ENCODE measurements at regions of chr7 and their contacts with region 1.

Region 1: GRCh38 chr7:75756991-75757676 is 14.9 kb downstream of the CCL26 start:
- DNase-seq: no peak
- ATAC-seq: peak in 1 of 4 donors; percentile 39
- H3K4me3 ChIP-seq: no peak overlapping the region
- H3K27ac ChIP-seq: no peak overlapping the region
- H3K4me1 ChIP-seq: peaks cover 0 to 1% (median 0%) of the 10 kb centered on the region in 12 donors
- H3K27me3 ChIP-seq: no peaks in the 10 kb centered on the region
- CTCF ChIP-seq: peak in 11 of 12 donors; percentile 24 to 53 (median 34)
- POLR2A ChIP-seq: no peak

Region 2: GRCh38 chr7:75662579-75663301 is 94.4 kb before region 1 on chr7:
- intact Hi-C with region 1: loop called in 1 of 10 experiments (anchors 5 kb)
- DNase-seq: no peak
- ATAC-seq: no peak
- H3K4me3 ChIP-seq: no peak overlapping the region
- H3K27ac ChIP-seq: no peak overlapping the region
- H3K4me1 ChIP-seq: peaks cover 0 to 3% (median 0%) of the 10 kb centered on the region in 12 donors
- H3K27me3 ChIP-seq: no peaks in the 10 kb centered on the region
- CTCF ChIP-seq: no peak
- POLR2A ChIP-seq: no peak

Measured in heart left ventricle (tissue), 16 donors.